Astrocyte of the cerebellum (primary cell): ENCODE measurements at regions of chr10 and their contacts with region 1.

Region 1: GRCh38 chr10:77641788-77642397 is 4.3 kb upstream of the KCNMA1 start:
- DNase-seq: peak; percentile 75
- H3K4me3 ChIP-seq: no peak overlapping the region
- CTCF ChIP-seq: peak; percentile 68

Region 2: GRCh38 chr10:77173615-77174461 is 468.1 kb before region 1 on chr10:
- in situ Hi-C with region 1: loop called (anchors 25 kb)
- DNase-seq: peak; percentile 80
- H3K4me3 ChIP-seq: no peak overlapping the region
- CTCF ChIP-seq: peak; percentile 85